B cell (primary cell): ENCODE measurements at regions of chr3 and their contacts with region 1.

Region 1: GRCh38 chr3:151327571-151328198 is 1.7 kb downstream of the P2RY13 start:
- DNase-seq: peak; percentile 33
- ATAC-seq: no peak
- H3K4me3 ChIP-seq: peak overlapping the region in 1 of 5 experiments; percentile 82
- H3K4me3 Mint-ChIP-seq: no peak overlapping the region
- H3K27ac ChIP-seq: no peak overlapping the region
- H3K27ac Mint-ChIP-seq: peak overlapping the region; percentile 75
- H3K4me1 ChIP-seq: peaks cover 7 to 8% of the 10 kb centered on the region in 2 donors
- H3K4me1 Mint-ChIP-seq: peaks cover 26% of the 10 kb centered on the region
- H3K27me3 ChIP-seq: no peaks in the 10 kb centered on the region
- H3K27me3 Mint-ChIP-seq: no peaks in the 10 kb centered on the region
- CTCF ChIP-seq: peak; percentile 81

Region 2: DNA sequence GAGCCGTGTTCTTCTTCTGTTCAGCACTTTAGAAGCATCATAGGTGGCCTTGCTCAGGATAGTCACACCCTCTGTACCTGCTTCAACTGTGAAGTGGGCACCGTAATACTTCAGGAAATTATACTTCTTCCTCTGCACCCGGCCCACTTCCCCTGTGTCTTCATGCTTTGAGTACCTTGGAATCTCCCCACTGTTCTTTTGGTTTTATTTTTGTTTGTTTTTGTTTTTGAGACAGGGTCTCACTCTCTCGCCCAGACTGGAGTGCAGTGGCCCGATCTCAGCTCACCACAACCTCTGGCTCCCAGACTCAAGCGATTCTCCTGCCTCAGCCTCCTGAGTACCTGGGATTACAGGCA is 51.0 kb before region 1 on chr3:
- CTCF ChIA-PET with region 1: interaction called, 7 read pairs
- POLR2A ChIA-PET with region 1: no interaction called
- intact Hi-C with region 1: loop called (anchors 5 kb)
- DNase-seq: peak; percentile 89
- ATAC-seq: peak; percentile 70
- H3K4me3 ChIP-seq: peak overlapping the region in 4 of 5 experiments; percentile 19 to 57 (median 48)
- H3K4me3 Mint-ChIP-seq: peak overlapping the region; percentile 82
- H3K27ac ChIP-seq: peak overlapping the region; percentile 91 to 96
- H3K27ac Mint-ChIP-seq: peak overlapping the region; percentile 98
- H3K4me1 ChIP-seq: peaks cover 69 to 76% of the 10 kb centered on the region in 2 donors
- H3K4me1 Mint-ChIP-seq: peaks cover 78% of the 10 kb centered on the region
- H3K27me3 ChIP-seq: no peaks in the 10 kb centered on the region
- H3K27me3 Mint-ChIP-seq: no peaks in the 10 kb centered on the region
- CTCF ChIP-seq: no peak

Region 3: GRCh38 chr3:151350656-151351618 is 23.3 kb after region 1 on chr3:
- CTCF ChIA-PET with region 1: interaction called, 6 read pairs
- POLR2A ChIA-PET with region 1: no interaction called
- intact Hi-C with region 1: loop called (anchors 2 kb)
- DNase-seq: peak; percentile 30
- ATAC-seq: peak; percentile 54
- H3K4me3 ChIP-seq: peak overlapping the region in 1 of 5 experiments; percentile 34
- H3K4me3 Mint-ChIP-seq: peak overlapping the region; percentile 59
- H3K27ac ChIP-seq: no peak overlapping the region
- H3K27ac Mint-ChIP-seq: peak overlapping the region; percentile 78
- H3K4me1 ChIP-seq: peaks cover 15 to 16% of the 10 kb centered on the region in 2 donors
- H3K4me1 Mint-ChIP-seq: peaks cover 37% of the 10 kb centered on the region
- H3K27me3 ChIP-seq: no peaks in the 10 kb centered on the region
- H3K27me3 Mint-ChIP-seq: no peaks in the 10 kb centered on the region
- CTCF ChIP-seq: no peak

Region 4: DNA sequence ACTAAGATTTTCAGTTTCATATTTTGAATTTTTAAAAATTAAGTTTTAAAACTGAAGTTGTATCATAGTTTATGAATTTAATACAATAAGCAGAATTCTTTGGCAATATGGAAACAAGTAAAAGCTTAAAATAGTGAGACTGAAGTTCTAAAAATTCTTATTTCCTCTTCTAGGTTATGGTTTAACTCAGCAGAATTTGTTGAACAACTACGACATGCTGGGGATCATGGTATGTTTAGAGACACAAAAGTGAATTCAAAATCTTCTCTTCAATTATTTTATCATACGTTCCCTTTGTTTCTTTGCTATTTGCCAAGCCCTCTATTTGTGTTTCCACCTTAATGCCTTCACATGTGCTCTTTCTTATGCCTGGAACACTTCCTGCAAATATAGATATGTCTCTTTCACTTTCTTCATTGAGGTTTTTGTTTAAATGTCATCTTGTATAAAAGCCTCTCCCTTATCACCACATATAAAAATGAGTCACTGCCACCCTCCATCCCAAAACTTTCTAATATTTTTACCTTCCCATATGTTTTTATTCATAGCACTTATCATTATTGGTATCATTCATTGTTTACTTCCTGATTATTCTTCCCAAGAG is 552.1 kb after region 1 on chr3:
- CTCF ChIA-PET with region 1: no interaction called
- POLR2A ChIA-PET with region 1: no interaction called
- intact Hi-C with region 1: no loop called
- DNase-seq: peak; percentile 5
- ATAC-seq: no peak
- H3K4me3 ChIP-seq: peak overlapping the region in 4 of 5 experiments; percentile 1 to 36 (median 22)
- H3K4me3 Mint-ChIP-seq: no peak overlapping the region
- H3K27ac ChIP-seq: peak overlapping the region in 1 of 2 donors; percentile 11
- H3K27ac Mint-ChIP-seq: no peak overlapping the region
- H3K4me1 ChIP-seq: peaks cover 5 to 13% of the 10 kb centered on the region in 2 donors
- H3K4me1 Mint-ChIP-seq: peaks cover 8% of the 10 kb centered on the region
- H3K27me3 ChIP-seq: no peaks in the 10 kb centered on the region
- H3K27me3 Mint-ChIP-seq: no peaks in the 10 kb centered on the region
- CTCF ChIP-seq: no peak

Region 5: DNA sequence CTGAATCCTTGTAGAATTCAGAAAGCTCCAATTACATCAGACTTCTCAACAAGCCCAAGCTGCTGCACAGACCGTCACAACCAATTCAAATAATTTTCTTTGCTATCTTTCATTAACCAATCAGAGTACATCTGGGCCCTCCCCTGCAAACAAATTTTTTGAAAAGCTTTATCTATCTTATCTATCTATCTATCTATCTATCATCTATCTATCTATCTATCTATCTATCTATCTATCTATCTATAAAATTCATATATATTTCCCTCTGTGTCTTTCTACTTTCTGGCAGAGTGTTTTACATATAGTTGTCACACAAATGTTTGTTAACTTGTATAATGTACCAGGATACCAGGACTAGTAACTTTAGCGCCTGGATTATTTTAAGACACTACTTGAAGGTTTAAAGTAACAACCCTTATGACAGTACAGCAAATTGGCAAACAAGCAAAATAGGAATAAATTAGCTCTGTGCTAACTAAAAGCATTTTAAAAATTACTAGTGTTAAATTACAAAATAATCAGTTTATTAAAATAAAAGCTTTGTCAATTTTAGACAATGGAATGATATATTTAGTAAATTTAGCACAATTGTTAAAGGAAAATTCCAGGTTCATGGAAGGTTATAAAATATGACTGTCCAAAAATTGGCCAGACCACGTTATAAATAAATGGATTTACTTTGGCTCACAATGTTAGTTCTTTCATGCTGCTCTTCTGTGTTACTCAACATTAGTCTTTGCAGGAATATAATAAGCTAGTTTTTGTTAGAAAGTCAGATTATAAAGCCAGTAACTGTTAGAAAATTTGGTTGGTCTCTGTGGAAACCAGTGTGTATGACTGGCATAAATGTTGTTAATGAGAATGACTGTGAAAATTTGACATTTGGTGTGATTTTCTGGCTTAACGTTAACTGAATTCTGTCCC is 684.4 kb after region 1 on chr3:
- CTCF ChIA-PET with region 1: no interaction called
- POLR2A ChIA-PET with region 1: no interaction called
- intact Hi-C with region 1: no loop called
- DNase-seq: no peak
- ATAC-seq: no peak
- H3K4me3 ChIP-seq: no peak overlapping the region
- H3K4me3 Mint-ChIP-seq: no peak overlapping the region
- H3K27ac ChIP-seq: no peak overlapping the region
- H3K27ac Mint-ChIP-seq: no peak overlapping the region
- H3K4me1 ChIP-seq: no peaks in the 10 kb centered on the region
- H3K4me1 Mint-ChIP-seq: no peaks in the 10 kb centered on the region
- H3K27me3 ChIP-seq: peaks cover 0 to 4% (median 0%) of the 10 kb centered on the region in 4 experiments
- H3K27me3 Mint-ChIP-seq: peaks cover 3% of the 10 kb centered on the region
- CTCF ChIP-seq: no peak